Mucosa of descending colon (tissue), 3 donors: ENCODE measurements at regions of chr2 and their contacts with region 1.

Region 1: GRCh38 chr2:237474931-237475703 is 11.9 kb upstream of the MLPH start:
- DNase-seq: peak; percentile 84 to 88 (median 88)
- ATAC-seq: peak; percentile 91
- H3K4me3 ChIP-seq: peak overlapping the region; percentile 44
- H3K4me1 ChIP-seq: peaks cover 5% of the 10 kb centered on the region
- CTCF ChIP-seq: peak; percentile 92

Region 2: DNA sequence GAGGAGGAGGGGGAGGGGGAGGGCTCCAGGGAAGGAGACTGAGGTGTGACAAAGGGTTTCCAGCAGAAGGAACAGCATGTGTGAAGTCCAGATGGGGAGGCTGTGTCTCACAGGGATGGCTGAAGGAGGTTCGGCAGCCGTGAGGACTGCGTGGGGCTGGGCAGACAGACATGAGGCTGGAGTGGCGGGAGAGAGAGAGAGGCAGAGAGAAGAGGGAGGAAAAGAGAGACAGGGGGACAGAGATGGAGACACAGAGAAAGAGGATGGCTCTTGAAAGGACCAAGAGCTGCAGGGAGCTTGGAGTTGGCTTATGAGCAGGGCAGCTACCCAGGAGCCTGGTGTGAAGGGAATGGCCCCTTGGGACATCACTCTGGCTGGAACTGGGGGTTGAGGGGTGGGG is 1072.0 kb before region 1 on chr2:
- intact Hi-C with region 1: no loop called
- DNase-seq: no peak
- ATAC-seq: no peak
- H3K4me3 ChIP-seq: no peak overlapping the region
- H3K4me1 ChIP-seq: no peaks in the 10 kb centered on the region
- CTCF ChIP-seq: no peak

Region 3: GRCh38 chr2:237154082-237154638 is 321.0 kb before region 1 on chr2:
- intact Hi-C with region 1: loop called in 1 of 2 experiments (anchors 10 kb)
- DNase-seq: no peak
- ATAC-seq: peak; percentile 46
- H3K4me3 ChIP-seq: no peak overlapping the region
- H3K4me1 ChIP-seq: no peaks in the 10 kb centered on the region
- CTCF ChIP-seq: peak; percentile 19

Region 4: GRCh38 chr2:237383991-237384671 is 91.0 kb before region 1 on chr2:
- intact Hi-C with region 1: no loop called
- DNase-seq: no peak
- ATAC-seq: no peak
- H3K4me3 ChIP-seq: no peak overlapping the region
- H3K4me1 ChIP-seq: no peaks in the 10 kb centered on the region
- CTCF ChIP-seq: no peak

Region 5: DNA sequence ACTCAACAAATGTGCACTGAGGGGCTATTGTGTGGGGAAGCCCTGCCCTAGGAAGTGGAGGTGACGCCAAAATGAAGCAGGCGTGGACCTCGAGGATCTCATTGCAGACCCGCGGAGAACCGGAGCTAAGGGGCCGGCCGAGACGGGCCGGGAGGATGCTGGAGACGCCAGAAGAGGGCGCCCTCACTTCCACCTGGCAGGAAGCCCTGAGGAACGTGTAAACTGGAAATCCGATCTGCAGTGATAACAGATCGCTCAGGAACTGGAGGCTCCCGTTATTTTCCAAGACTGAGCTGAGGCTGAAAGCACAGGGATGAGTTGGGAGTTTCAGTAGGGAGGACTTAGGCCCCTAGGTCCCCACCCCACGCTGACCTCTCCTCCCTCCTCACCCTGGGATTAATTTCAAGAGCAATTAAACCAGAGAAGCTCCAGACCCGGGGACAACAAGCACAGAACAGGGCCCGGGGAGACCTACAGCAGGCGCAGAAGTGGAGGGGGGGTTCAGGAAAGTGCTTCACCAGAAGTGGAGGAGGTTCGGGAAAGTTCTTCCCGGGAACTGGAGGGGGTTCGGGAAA is 53.5 kb before region 1 on chr2:
- intact Hi-C with region 1: loop called in 1 of 2 experiments (anchors 10 kb)
- DNase-seq: peak; percentile 74 to 83 (median 82)
- ATAC-seq: peak; percentile 93
- H3K4me3 ChIP-seq: no peak overlapping the region
- H3K4me1 ChIP-seq: no peaks in the 10 kb centered on the region
- CTCF ChIP-seq: peak; percentile 82